ENCODE measurements at regions of chr22 and their contacts with region 1.

Region 1: DNA sequence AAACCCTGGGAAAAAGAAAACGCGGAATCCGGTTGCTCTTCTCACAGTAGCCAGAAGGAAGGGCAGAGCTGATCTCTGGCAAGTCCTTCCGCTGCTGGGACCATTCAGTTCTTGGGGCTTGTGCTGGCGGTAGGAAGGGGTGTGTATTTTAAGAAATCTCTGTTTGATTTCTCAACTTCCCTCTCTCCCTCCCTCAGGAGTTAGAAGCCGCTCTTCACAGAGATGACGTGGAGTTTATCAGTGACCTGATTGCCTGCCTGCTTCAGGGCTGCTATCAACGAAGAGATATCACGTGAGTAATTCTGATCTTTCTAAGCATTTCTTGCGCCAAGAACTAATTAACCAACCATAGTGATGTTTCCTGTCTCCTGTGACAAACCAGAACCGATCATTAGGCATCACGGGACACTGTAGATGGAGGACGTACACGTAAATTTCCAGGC is 85.9 kb upstream of the SLC25A18 start:
- DNase-seq: no peak
- H3K4me3 ChIP-seq: no peak overlapping the region
- H3K27ac ChIP-seq: no peak overlapping the region
- H3K4me1 ChIP-seq: no peaks in the 10 kb centered on the region
- CTCF ChIP-seq: no peak

Region 2: DNA sequence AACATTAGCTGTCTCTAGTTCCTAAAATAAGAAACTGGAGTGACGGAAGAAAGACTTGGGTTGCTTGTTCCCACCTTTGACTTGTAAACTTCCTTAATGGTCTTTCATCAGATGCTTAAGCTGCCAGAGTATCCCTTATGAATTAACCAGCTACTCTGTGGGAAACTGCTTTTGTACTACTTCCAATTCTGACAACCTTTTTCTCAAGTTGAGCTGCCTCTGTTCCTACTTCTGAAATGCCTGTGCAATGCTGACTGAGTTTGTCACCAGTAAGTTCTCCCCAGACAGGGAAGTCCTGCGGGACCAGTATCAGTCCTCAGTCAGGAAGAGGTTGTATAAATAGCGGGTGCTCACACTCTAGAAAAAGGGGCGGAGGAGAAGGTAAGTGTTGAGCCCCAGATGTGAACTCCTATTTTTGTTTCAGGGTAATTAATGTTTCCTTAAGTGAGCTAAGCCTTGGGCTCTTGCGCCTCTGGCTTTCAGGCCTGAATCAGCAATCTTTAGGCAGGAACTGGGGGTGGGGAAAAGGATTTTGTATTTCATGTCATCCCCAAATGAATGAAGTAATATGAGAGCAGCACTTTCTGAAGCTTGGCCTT is 40.9 kb before region 1 on chr22:
- CTCF ChIA-PET with region 1: no interaction called
- POLR2A ChIA-PET with region 1: no interaction called
- intact Hi-C with region 1: loop called (anchors 5 kb)
- DNase-seq: peak; percentile 49
- H3K4me3 ChIP-seq: no peak overlapping the region
- H3K27ac ChIP-seq: peak overlapping the region; percentile 21
- H3K4me1 ChIP-seq: peaks cover 26% of the 10 kb centered on the region
- CTCF ChIP-seq: peak; percentile 36; the same call in 1 of the 2 replicates

Region 3: DNA sequence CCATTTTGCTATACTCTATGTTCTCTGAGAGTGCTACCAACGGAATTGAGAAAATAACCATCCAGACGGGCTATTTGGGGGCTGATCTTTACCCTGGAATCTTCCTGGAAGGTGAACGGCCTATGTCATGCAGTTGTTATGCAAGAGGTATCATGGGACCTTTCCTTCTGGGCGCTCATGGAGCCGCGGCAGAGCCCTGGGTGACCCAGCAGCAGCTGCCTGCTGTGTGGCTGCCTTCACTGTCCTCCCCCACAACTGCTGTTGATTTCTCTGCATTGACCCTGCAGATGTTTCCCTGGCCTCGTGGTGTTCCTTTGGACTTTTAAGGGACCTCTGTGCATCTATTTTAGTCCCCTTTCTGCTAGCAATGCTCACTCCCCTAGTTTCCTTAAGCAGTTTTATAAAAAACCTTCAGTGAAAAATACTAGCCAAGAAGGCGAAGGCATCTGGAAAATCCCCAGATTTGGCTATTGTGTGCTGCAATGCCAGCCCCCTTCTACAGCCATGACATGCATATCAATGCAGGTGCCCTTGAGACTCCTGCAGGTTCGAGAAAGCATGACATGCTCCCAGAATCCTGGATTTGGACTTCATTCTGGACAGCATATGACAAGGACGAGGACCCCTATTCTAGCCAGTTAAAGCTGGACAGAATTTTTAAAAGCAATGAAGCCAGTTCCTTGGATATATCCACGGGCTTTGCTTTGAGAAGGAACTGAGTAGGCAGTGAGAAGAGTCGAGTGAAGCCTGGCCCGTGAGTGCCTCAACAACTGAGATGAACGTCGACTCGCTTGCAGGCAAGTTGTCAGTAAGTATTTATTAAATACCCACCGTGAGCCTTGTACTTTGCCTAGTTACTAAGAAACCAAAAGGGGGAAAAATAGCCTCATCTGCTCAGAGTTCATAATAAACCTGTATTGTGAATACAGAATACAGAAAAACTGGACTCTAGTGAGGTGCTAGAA is 85.8 kb after region 1 on chr22 and contains the start of gene SLC25A18:
- CTCF ChIA-PET with region 1: no interaction called
- POLR2A ChIA-PET with region 1: no interaction called
- intact Hi-C with region 1: no loop called
- DNase-seq: no peak
- H3K4me3 ChIP-seq: no peak within 1 kb of the TSS
- H3K27ac ChIP-seq: no peak within 1 kb of the TSS
- H3K4me1 ChIP-seq: peaks cover 30% of the 10 kb centered on the region
- CTCF ChIP-seq: 0 out of 2 replicates have a peak, but pooled peaks have one; percentile 21
- total RNA-seq, gene SLC25A18: not detected in 2 replicates